ENCODE measurements at regions of chr12 and their contacts with region 1.

Region 1: DNA sequence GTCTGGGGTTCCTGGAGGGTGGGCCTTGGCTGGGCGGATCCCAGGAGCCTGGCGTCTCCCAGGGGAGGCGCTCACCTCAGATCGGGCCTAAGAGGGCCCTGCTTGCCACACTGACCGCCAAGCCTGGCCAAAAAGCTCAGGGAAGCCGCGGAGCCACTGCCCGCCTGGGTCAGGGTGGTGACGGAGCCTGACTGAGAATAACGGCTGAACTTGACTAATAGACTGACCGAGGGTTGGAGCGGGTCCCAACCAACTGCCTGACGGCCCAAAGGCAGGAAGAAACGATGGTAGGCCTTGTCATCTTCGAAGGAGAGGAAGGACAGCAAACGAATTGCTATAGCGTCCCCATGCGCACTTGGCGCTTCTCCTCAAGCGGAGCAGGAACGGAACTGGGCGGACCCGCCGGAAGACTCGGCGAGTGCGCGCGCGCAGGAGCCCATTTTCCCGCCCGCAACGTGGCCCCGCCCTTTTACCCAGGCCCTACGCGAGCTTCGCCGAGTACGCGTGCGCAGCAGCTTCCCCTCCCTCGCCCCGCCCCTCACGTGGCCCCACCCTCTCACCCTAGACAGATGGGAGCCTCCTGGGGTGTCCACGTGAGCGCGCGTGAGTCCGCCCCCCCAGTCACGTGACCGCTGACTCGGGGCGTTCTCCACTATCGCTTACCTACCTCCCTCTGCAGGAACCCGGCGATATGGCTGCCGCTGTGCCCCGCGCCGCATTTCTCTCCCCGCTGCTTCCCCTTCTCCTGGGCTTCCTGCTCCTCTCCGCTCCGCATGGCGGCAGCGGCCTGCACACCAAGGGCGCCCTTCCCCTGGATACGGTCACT is at the starts of genes ERP29 and TMEM116:
- DNase-seq: peak; percentile 98
- H3K4me3 ChIP-seq: peak within 1 kb of the TSS; percentile 96
- H3K27ac ChIP-seq: peak within 1 kb of the TSS; percentile 91
- H3K27me3 ChIP-seq: no peaks in the 10 kb centered on the region
- CTCF ChIP-seq: peak; percentile 60
- polyA plus RNA-seq, gene ERP29: 112 and 125 TPM in 2 replicates
- polyA plus RNA-seq, gene TMEM116: 9.4 and 11.1 TPM in 2 replicates

Region 2: DNA sequence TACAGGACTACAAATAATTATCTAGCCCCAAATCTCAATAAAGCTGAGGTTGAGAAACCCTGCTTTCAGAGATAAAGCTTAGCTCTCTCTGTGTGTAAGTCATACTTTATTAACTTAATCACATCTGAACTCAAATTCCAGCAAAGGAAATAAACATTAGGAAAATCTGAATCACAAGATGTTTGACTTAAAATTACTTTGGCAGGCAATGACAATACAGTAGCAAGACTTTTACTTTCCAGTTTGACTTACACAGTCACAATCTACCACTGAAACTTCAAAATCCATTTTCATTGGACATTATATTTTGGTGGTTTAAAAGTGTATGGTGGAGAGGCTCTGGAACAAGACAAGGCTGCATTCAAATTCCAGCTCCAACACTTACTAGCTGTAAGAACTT is 11.4 kb before region 1 on chr12:
- CTCF ChIA-PET with region 1: interaction called, 10 read pairs
- POLR2A ChIA-PET with region 1: no interaction called
- DNase-seq: no peak
- H3K4me3 ChIP-seq: no peak overlapping the region
- H3K27ac ChIP-seq: no peak overlapping the region
- H3K27me3 ChIP-seq: no peaks in the 10 kb centered on the region
- CTCF ChIP-seq: no peak

Region 3: GRCh38 chr12:112031472-112031871 is 18.5 kb after region 1 on chr12:
- CTCF ChIA-PET with region 1: no interaction called
- POLR2A ChIA-PET with region 1: no interaction called
- DNase-seq: no peak
- H3K4me3 ChIP-seq: no peak overlapping the region
- H3K27ac ChIP-seq: no peak overlapping the region
- H3K27me3 ChIP-seq: no peaks in the 10 kb centered on the region
- CTCF ChIP-seq: no peak

Measured in AG04450 (cell line).